ENCODE measurements at regions of chr5 and their contacts with region 1.

Region 1: GRCh38 chr5:61658592-61659008 is 326.5 kb downstream of the ZSWIM6 start:
- DNase-seq: peak; percentile 64 to 92 (median 78)
- ATAC-seq: peak; percentile 59
- H3K4me3 ChIP-seq: no peak overlapping the region
- H3K4me3 Mint-ChIP-seq: no peak overlapping the region
- H3K27ac ChIP-seq: no peak overlapping the region
- H3K27ac Mint-ChIP-seq: no peak overlapping the region
- H3K4me1 ChIP-seq: no peaks in the 10 kb centered on the region
- H3K4me1 Mint-ChIP-seq: no peaks in the 10 kb centered on the region
- H3K27me3 ChIP-seq: peaks cover 0 to 2% of the 10 kb centered on the region in 2 experiments
- H3K27me3 Mint-ChIP-seq: peaks cover 22% of the 10 kb centered on the region
- CTCF ChIP-seq: peak; percentile 93

Region 2: DNA sequence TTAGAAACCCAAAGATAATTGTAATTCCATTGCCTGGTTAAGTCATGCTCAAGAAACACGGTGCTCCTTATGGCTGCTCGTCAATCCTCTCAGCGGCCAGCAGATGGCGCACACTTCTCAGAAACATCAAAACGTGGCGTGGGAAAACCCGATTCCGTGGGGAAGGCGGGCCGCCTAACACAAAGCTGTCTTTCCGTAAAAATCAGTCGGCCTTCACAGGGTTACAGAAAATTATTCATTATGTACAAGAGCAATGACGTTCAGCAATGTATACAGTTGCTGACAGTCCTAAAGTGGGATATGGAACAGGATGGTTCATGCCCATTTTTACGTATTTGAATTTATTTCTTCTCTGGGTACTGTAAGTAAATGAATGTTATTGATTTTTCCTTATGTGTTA is 1848.6 kb before region 1 on chr5:
- CTCF ChIA-PET with region 1: no interaction called
- POLR2A ChIA-PET with region 1: no interaction called
- intact Hi-C with region 1: loop called in 1 of 2 experiments (anchors 5 kb)
- DNase-seq: peak; percentile 4 to 75 (median 50)
- ATAC-seq: peak; percentile 52
- H3K4me3 ChIP-seq: no peak overlapping the region
- H3K4me3 Mint-ChIP-seq: no peak overlapping the region
- H3K27ac ChIP-seq: no peak overlapping the region
- H3K27ac Mint-ChIP-seq: no peak overlapping the region
- H3K4me1 ChIP-seq: no peaks in the 10 kb centered on the region
- H3K4me1 Mint-ChIP-seq: peaks cover 4% of the 10 kb centered on the region
- H3K27me3 ChIP-seq: peaks cover 0 to 3% of the 10 kb centered on the region in 2 experiments
- H3K27me3 Mint-ChIP-seq: peaks cover 11% of the 10 kb centered on the region
- CTCF ChIP-seq: peak; percentile 96

Region 3: DNA sequence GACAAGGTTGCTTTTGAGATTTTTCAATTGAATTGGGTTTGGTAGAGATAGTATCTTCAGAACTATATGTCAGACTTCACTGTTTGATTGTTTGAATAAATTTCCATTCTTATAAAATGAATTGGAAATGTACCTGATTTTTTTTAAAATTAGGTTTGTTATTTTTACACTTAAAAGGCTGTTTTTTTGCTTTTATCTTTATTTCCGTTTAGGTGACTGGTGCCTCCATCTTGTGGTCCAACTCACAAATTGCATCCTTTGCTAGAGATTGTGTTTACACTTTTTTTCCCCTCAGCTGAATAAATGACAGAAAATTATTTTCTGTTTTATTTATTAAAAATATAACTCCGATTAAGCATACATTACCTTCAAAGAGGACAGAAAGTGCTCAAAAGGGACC is 698.0 kb before region 1 on chr5:
- CTCF ChIA-PET with region 1: interaction called, 47 read pairs
- POLR2A ChIA-PET with region 1: no interaction called
- intact Hi-C with region 1: loop called (anchors 1 kb)
- DNase-seq: peak in 3 of 9 experiments; percentile 18 to 49 (median 30)
- ATAC-seq: peak; percentile 59
- H3K4me3 ChIP-seq: no peak overlapping the region
- H3K4me3 Mint-ChIP-seq: no peak overlapping the region
- H3K27ac ChIP-seq: no peak overlapping the region
- H3K27ac Mint-ChIP-seq: no peak overlapping the region
- H3K4me1 ChIP-seq: peaks cover 5% of the 10 kb centered on the region
- H3K4me1 Mint-ChIP-seq: peaks cover 22% of the 10 kb centered on the region
- H3K27me3 ChIP-seq: no peaks in the 10 kb centered on the region
- H3K27me3 Mint-ChIP-seq: no peaks in the 10 kb centered on the region
- CTCF ChIP-seq: peak; percentile 74

Region 4: GRCh38 chr5:61167382-61167781 is 491.2 kb before region 1 on chr5:
- CTCF ChIA-PET with region 1: interaction called, 3 read pairs
- POLR2A ChIA-PET with region 1: no interaction called
- intact Hi-C with region 1: loop called in 1 of 2 experiments (anchors 5 kb)
- DNase-seq: peak in 1 of 9 experiments; percentile 5
- ATAC-seq: no peak
- H3K4me3 ChIP-seq: no peak overlapping the region
- H3K4me3 Mint-ChIP-seq: no peak overlapping the region
- H3K27ac ChIP-seq: no peak overlapping the region
- H3K27ac Mint-ChIP-seq: no peak overlapping the region
- H3K4me1 ChIP-seq: peaks cover 9% of the 10 kb centered on the region
- H3K4me1 Mint-ChIP-seq: peaks cover 17% of the 10 kb centered on the region
- H3K27me3 ChIP-seq: no peaks in the 10 kb centered on the region
- H3K27me3 Mint-ChIP-seq: no peaks in the 10 kb centered on the region
- CTCF ChIP-seq: no peak

Region 5: DNA sequence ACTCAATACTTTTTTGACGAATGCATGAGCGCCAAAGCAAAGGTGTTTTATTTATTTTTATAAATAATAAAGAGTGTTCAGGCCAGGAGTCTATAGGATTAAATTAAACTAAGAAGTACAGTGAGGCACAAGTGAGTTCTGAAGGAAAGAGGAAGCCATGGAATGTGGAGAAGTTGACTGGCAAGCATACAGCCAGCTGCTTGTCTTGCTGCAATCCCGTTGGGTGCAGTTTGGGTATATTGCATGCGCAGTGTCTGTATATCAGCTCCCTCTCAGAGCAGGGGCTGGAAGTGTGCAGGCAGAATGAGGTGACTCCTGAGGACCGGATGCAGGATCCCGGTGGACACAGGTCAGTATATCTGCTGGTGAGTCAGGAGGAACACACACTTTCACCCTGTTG is 10.9 kb before region 1 on chr5:
- CTCF ChIA-PET with region 1: interaction called, 27 read pairs
- POLR2A ChIA-PET with region 1: no interaction called
- intact Hi-C with region 1: no loop called
- DNase-seq: no peak
- ATAC-seq: no peak
- H3K4me3 ChIP-seq: no peak overlapping the region
- H3K4me3 Mint-ChIP-seq: no peak overlapping the region
- H3K27ac ChIP-seq: no peak overlapping the region
- H3K27ac Mint-ChIP-seq: no peak overlapping the region
- H3K4me1 ChIP-seq: no peaks in the 10 kb centered on the region
- H3K4me1 Mint-ChIP-seq: no peaks in the 10 kb centered on the region
- H3K27me3 ChIP-seq: peaks cover 0 to 2% of the 10 kb centered on the region in 2 experiments
- H3K27me3 Mint-ChIP-seq: peaks cover 9% of the 10 kb centered on the region
- CTCF ChIP-seq: no peak

Measured in CD8-positive, alpha-beta T cell (primary cell).